ENCODE measurements at regions of chr7 and their contacts with region 1.

Region 1: GRCh38 chr7:66697449-66698438 is 42.8 kb upstream of the RABGEF1 start:
- DNase-seq: no peak
- H3K4me3 ChIP-seq: no peak overlapping the region
- H3K27ac ChIP-seq: no peak overlapping the region
- H3K4me1 ChIP-seq: no peaks in the 10 kb centered on the region
- H3K27me3 ChIP-seq: no peaks in the 10 kb centered on the region
- CTCF ChIP-seq: no peak

Region 2: GRCh38 chr7:66715676-66716075 is 17.9 kb after region 1 on chr7:
- CTCF ChIA-PET with region 1: no interaction called
- POLR2A ChIA-PET with region 1: no interaction called
- intact Hi-C with region 1: no loop called
- DNase-seq: no peak
- H3K4me3 ChIP-seq: no peak overlapping the region
- H3K27ac ChIP-seq: no peak overlapping the region
- H3K4me1 ChIP-seq: no peaks in the 10 kb centered on the region
- H3K27me3 ChIP-seq: no peaks in the 10 kb centered on the region
- CTCF ChIP-seq: no peak

Region 3: DNA sequence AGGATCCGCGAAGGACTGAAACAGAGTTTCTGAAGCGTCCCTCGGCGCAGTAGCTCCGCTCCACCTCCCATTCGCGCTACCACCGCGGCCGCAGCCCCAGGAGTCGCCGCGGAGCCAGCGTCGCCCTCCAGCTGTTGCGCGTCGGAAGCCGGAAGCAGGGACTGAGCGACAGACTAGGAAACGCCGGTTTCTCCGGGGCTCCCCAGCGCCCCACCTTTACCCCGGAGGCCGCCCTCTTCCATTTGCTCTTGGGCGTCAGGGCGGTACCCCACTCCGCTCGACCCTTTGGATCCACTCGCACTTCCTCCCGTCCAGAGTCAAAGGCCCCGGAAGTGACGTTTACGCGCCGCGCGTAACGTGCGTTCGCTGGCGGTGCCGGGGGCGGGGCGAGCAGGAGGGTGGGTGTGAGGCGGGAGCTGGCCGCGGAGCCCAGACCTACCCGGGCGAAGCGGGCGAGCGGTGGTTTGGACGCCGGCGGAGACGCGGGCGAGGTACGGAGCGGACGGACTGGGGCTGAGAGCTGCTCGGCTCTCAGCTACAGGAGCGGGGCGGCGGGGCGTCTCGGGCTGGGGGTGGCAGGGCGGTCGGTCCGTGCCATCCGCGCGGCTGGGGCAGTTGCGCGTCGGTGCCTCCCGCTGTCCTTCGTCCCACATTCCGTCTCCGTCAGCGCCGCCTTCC is 42.7 kb after region 1 on chr7 and contains the start of gene RABGEF1:
- CTCF ChIA-PET with region 1: no interaction called
- POLR2A ChIA-PET with region 1: interaction called, 16 read pairs
- intact Hi-C with region 1: no loop called
- DNase-seq: peak; percentile 98
- H3K4me3 ChIP-seq: peak within 1 kb of the TSS; percentile 99
- H3K27ac ChIP-seq: peak within 1 kb of the TSS; percentile 88
- H3K4me1 ChIP-seq: peaks cover 3% of the 10 kb centered on the region
- H3K27me3 ChIP-seq: no peaks in the 10 kb centered on the region
- CTCF ChIP-seq: no peak
- total RNA-seq, gene RABGEF1: 16.9 and 20.0 TPM in 2 replicates

Region 4: GRCh38 chr7:66970310-66970709 is 272.6 kb after region 1 on chr7:
- CTCF ChIA-PET with region 1: no interaction called
- POLR2A ChIA-PET with region 1: no interaction called
- intact Hi-C with region 1: no loop called
- DNase-seq: no peak
- H3K4me3 ChIP-seq: no peak overlapping the region
- H3K27ac ChIP-seq: no peak overlapping the region
- H3K4me1 ChIP-seq: no peaks in the 10 kb centered on the region
- H3K27me3 ChIP-seq: no peaks in the 10 kb centered on the region
- CTCF ChIP-seq: no peak

Region 5: DNA sequence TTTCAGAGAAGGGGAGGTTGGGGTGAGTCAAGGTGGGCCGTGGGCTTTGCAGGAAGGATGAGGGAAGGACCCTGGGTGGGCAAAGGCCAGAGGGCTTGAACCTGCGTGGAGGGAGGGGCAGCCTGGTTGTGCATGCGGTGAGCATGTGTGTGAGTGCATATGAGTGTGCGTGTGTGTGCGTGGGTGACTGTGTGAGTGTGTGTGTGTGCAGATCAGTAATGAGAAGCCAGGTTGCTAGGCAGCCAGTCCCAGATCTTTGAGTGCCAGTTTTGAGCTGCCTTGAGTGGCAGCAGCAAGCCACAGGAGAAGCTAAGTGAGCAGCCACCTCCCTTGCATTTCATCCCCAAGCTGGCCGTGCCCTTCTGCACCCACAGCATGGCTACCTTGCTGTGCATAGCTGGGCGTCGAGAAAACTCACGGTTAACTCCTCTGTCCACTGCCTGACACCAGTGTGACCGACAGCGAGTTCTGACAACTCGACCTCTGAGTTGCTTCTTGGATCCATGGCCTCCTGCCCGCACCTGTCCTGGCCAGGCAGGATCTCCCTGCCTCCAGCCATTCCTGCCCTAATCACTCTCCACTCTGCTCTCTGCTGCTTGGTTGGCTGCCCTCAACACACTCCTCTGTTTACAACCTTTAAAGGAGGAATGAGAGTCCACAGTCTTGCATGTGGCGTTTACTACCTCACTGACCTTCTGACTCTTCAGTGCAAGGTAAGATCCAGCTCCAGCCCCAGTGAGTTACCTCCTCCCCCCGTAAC is 1074.3 kb after region 1 on chr7:
- CTCF ChIA-PET with region 1: no interaction called
- POLR2A ChIA-PET with region 1: no interaction called
- intact Hi-C with region 1: no loop called
- DNase-seq: no peak
- H3K4me3 ChIP-seq: no peak overlapping the region
- H3K27ac ChIP-seq: no peak overlapping the region
- H3K4me1 ChIP-seq: no peaks in the 10 kb centered on the region
- H3K27me3 ChIP-seq: no peaks in the 10 kb centered on the region
- CTCF ChIP-seq: no peak